Posterior cingulate gyrus (tissue), 11 donors: ENCODE measurements at regions of chr9 and their contacts with region 1.

Region 1: GRCh38 chr9:123871781-123872180 is 58.1 kb downstream of the DENND1A start:
- DNase-seq: peak in 5 of 10 donors; percentile 11 to 84 (median 25)

Region 2: GRCh38 chr9:123426401-123426800 is 445.4 kb before region 1 on chr9:
- intact Hi-C with region 1: no loop called
- DNase-seq: peak in 2 of 10 donors; percentile 7 to 32

Region 3: GRCh38 chr9:123544007-123544827 is 327.6 kb before region 1 on chr9:
- intact Hi-C with region 1: loop called (anchors 10 kb)
- DNase-seq: peak in 2 of 10 donors; percentile 21 to 28